HepG2 (cell line): ENCODE measurements at regions of chr7 and their contacts with region 1.

Region 1: GRCh38 chr7:134741907-134742635 is 37.4 kb upstream of the CALD1 start:
- DNase-seq: no peak
- ATAC-seq: no peak
- H3K4me3 ChIP-seq: no peak overlapping the region
- H3K27ac ChIP-seq: no peak overlapping the region
- H3K4me1 ChIP-seq: no peaks in the 10 kb centered on the region
- H3K27me3 ChIP-seq: peaks cover 0 to 4% of the 10 kb centered on the region in 2 experiments; a peak in 1 of 5 replicates
- CTCF ChIP-seq: no peak
- EP300 ChIP-seq: no peak
- POLR2A ChIP-seq: no peak
- RAD21 ChIP-seq: no peak

Region 2: DNA sequence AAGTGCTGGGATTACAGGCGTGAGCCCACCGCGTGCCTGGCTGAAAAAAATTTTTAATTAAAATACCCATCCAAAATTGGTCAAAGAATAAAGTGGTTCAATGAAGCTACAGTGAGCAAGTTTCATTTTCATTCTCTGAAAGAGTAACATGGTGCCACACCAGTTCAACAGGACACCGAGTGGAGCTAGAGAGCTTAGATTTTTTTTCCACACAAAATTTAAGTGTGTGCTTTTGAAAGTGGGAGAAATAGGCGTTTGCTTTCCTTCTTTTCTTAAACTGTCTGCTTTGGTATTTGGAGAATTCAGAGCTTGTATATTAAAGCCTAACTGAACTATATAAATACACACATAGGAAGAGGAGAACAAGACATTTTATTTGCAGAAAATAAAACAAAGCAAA is 52.1 kb before region 1 on chr7:
- CTCF ChIA-PET with region 1: no interaction called
- POLR2A ChIA-PET with region 1: no interaction called
- in situ Hi-C with region 1: no loop called
- intact Hi-C with region 1: loop called (anchors 10 kb)
- DNase-seq: no peak
- ATAC-seq: peak; percentile 68
- H3K4me3 ChIP-seq: no peak overlapping the region
- H3K27ac ChIP-seq: no peak overlapping the region
- H3K4me1 ChIP-seq: peaks cover 28% of the 10 kb centered on the region
- H3K27me3 ChIP-seq: peaks cover 0 to 3% of the 10 kb centered on the region in 2 experiments; a peak in 2 of 5 replicates
- CTCF ChIP-seq: peak; percentile 46; the same call in 1 of the 2 replicates
- EP300 ChIP-seq: no peak
- POLR2A ChIP-seq: no peak
- RAD21 ChIP-seq: no peak

Region 3: DNA sequence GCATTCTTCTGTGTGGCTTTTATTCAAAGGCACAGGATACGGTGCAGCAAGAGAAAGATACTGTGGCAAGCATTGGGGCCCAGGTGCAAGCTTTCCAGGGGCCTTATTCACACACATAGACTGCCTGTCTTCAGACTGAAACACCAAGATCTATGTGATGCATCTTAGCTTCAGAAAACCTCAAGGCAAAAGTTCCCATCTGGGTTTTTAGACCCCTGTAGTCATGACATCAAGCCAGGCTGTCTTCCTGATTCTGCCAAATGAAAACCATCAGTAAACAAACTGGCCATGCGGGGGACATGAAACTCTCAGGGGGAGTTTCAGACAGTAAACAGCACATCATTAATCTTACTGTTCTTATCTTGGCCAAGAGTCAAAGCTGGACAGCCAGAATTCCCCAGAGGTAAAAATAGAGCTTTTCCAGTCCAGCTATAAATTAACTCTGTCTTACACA is 254.1 kb after region 1 on chr7:
- CTCF ChIA-PET with region 1: no interaction called
- POLR2A ChIA-PET with region 1: no interaction called
- in situ Hi-C with region 1: no loop called
- intact Hi-C with region 1: no loop called
- DNase-seq: no peak
- ATAC-seq: no peak
- H3K4me3 ChIP-seq: no peak overlapping the region
- H3K27ac ChIP-seq: peak overlapping the region; percentile 85
- H3K4me1 ChIP-seq: peaks cover 85% of the 10 kb centered on the region
- H3K27me3 ChIP-seq: no peaks in the 10 kb centered on the region
- CTCF ChIP-seq: no peak
- EP300 ChIP-seq: no peak
- POLR2A ChIP-seq: no peak
- RAD21 ChIP-seq: no peak